Calu3 (cell line): ENCODE measurements at regions of chr10 and their contacts with region 1.

Region 1: DNA sequence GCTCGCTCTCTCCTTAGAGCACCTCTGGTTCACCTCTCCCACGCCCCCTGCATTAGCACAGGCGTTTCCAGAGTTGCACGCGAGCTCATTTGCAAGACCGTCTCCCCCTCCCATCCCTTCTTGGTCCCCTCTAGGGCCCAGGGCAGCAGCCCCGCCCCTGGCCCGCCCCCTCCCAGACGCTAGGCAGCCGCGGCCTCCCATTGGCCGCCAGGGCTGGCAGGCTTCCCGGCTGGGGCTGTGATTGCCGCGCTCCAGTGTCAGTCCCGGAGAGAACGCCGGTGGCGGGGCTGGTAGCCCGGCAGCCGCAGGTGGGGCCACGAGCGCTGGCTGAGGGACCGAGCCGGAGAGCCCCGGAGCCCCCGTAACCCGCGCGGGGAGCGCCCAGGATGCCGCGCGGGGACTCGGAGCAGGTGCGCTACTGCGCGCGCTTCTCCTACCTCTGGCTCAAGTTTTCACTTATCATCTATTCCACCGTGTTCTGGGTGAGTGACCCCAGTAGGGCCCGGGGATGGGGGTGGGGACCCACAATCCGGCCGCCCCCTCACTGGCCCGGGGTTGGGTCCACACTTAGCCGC is at the start of gene TSPAN15:
- DNase-seq: peak; percentile 98
- H3K4me3 Mint-ChIP-seq: peak within 1 kb of the TSS; percentile 97
- H3K27ac Mint-ChIP-seq: peak within 1 kb of the TSS; percentile 78
- H3K4me1 Mint-ChIP-seq: peaks cover 66% of the 10 kb centered on the region
- H3K27me3 Mint-ChIP-seq: no peaks in the 10 kb centered on the region
- CTCF ChIP-seq: no peak
- total RNA-seq, gene TSPAN15: 137 and 165 TPM in 2 replicates

Region 2: DNA sequence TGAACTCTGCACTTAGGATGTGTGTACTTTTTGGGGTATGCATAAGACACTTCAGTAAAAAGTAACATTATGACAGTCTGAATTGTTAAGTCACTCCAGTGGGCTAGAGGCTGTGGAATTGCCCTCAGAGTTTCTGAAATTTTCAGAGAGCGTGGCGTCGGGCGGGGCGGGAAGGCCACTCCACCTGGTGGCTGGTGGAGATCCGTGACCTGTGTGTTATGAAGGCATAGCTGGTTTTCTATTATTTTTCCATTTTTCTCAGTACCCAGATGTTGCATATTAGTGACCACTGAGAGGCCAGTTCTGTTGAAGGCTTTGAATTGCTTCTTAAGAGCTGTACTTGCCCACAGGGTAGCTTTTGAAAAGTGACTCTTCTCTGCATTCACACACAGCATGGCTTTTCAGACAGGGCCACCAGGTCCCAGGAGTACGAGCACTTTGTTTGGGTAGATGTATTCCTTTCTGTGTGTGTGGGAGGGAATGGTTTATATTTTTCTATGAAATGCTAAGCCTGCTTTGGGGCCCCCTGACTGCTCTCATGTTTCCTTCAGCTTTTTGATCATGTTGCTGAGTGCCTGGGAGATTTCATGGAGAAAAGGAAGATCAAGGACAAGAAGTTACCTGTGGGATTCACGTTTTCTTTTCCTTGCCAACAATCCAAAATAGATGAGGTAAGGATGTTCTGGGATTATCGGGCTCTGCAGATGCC is 86.9 kb before region 1 on chr10:
- CTCF ChIA-PET with region 1: no interaction called
- intact Hi-C with region 1: no loop called
- DNase-seq: no peak
- H3K4me3 Mint-ChIP-seq: no peak overlapping the region
- H3K27ac Mint-ChIP-seq: no peak overlapping the region
- H3K4me1 Mint-ChIP-seq: peaks cover 37% of the 10 kb centered on the region
- H3K27me3 Mint-ChIP-seq: no peaks in the 10 kb centered on the region
- CTCF ChIP-seq: no peak

Region 3: GRCh38 chr10:69439813-69440506 is 11.3 kb before region 1 on chr10:
- CTCF ChIA-PET with region 1: interaction called, 43 read pairs
- intact Hi-C with region 1: no loop called
- DNase-seq: peak; percentile 76
- H3K4me3 Mint-ChIP-seq: no peak overlapping the region
- H3K27ac Mint-ChIP-seq: peak overlapping the region; percentile 80
- H3K4me1 Mint-ChIP-seq: peaks cover 57% of the 10 kb centered on the region
- H3K27me3 Mint-ChIP-seq: no peaks in the 10 kb centered on the region
- CTCF ChIP-seq: no peak

Region 4: GRCh38 chr10:69468751-69469089 is 17.4 kb after region 1 on chr10:
- CTCF ChIA-PET with region 1: interaction called, 19 read pairs
- intact Hi-C with region 1: no loop called
- DNase-seq: no peak
- H3K4me3 Mint-ChIP-seq: no peak overlapping the region
- H3K27ac Mint-ChIP-seq: no peak overlapping the region
- H3K4me1 Mint-ChIP-seq: peaks cover 70% of the 10 kb centered on the region
- H3K27me3 Mint-ChIP-seq: no peaks in the 10 kb centered on the region
- CTCF ChIP-seq: no peak

Region 5: GRCh38 chr10:69639291-69640195 is 188.2 kb after region 1 on chr10:
- CTCF ChIA-PET with region 1: interaction called, 11 read pairs
- intact Hi-C with region 1: no loop called
- DNase-seq: peak; percentile 74
- H3K4me3 Mint-ChIP-seq: no peak overlapping the region
- H3K27ac Mint-ChIP-seq: no peak overlapping the region
- H3K4me1 Mint-ChIP-seq: no peaks in the 10 kb centered on the region
- H3K27me3 Mint-ChIP-seq: peaks cover 18% of the 10 kb centered on the region
- CTCF ChIP-seq: peak; percentile 97